ENCODE measurements at regions of chr3 and their contacts with region 1.

Region 1: DNA sequence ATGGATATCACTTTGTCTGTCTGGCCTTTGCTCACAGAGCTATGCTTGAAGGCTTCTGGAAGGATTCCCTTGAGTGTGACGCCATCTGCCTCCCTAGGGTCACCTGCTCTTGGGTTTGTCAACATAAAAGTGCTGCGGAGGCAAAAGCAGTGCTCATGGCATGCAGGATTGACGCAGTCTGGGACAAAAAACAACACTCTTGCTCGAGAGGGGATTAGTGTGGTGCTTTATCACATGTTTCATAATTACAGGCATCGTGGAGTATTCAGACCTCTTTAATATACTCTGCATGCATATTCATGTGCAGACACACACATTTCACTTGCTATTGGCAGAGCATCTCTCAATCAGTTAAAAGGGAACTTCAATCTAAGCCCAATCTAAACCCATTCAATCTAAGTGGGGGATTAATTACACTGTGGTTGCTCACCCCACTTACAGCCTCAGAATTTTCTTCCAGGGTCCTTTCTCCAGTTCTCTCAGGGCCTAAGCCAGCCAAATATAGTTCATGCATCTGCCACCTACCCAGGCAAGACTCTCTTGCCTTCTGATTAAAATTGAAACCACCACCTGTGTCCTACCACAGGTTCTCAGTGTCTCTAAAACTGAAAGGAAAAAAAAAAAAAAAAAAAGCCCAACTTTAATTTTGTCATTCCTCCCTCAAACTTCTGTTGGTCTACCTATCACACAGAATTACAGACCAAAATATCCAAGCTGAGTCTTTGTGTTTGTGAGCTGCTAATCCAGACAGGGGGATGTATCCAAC is 75.6 kb downstream of the BFSP2 start:
- DNase-seq: peak; percentile 80
- H3K4me3 Mint-ChIP-seq: peak overlapping the region; percentile 6
- H3K27ac Mint-ChIP-seq: peak overlapping the region; percentile 70
- H3K4me1 Mint-ChIP-seq: peaks cover 46% of the 10 kb centered on the region
- H3K27me3 Mint-ChIP-seq: no peaks in the 10 kb centered on the region

Region 2: GRCh38 chr3:133464573-133464972 is 10.9 kb before region 1 on chr3:
- intact Hi-C with region 1: loop called (anchors 1 kb)
- DNase-seq: no peak
- H3K4me3 Mint-ChIP-seq: no peak overlapping the region
- H3K27ac Mint-ChIP-seq: no peak overlapping the region
- H3K4me1 Mint-ChIP-seq: peaks cover 40% of the 10 kb centered on the region
- H3K27me3 Mint-ChIP-seq: no peaks in the 10 kb centered on the region

Region 3: DNA sequence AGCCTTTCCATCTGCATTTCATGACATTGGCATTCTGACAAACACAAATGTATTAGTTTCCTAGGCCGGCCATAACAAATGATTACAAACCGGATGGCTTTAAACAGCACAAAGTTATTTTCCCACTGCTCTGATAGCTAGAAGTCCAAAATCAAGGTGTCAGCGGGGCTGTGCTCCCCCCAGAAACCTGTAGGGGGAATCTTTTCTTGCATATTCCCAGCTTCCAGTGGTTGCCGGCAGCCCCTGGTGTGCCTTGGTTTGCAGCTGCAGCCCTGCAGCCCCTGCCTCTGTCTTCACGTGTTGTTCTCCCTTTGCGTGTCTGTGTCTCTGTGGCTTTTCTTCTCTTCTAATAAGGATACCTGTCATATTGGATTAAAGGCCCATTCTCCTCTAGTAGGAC is 19.0 kb after region 1 on chr3:
- intact Hi-C with region 1: loop called (anchors 1 kb)
- DNase-seq: no peak
- H3K4me3 Mint-ChIP-seq: no peak overlapping the region
- H3K27ac Mint-ChIP-seq: no peak overlapping the region
- H3K4me1 Mint-ChIP-seq: peaks cover 33% of the 10 kb centered on the region
- H3K27me3 Mint-ChIP-seq: no peaks in the 10 kb centered on the region

Region 4: GRCh38 chr3:133506215-133506901 is 30.9 kb after region 1 on chr3:
- intact Hi-C with region 1: loop called (anchors 1 kb)
- DNase-seq: peak; percentile 83
- H3K4me3 Mint-ChIP-seq: peak overlapping the region; percentile 73
- H3K27ac Mint-ChIP-seq: peak overlapping the region; percentile 83
- H3K4me1 Mint-ChIP-seq: peaks cover 13% of the 10 kb centered on the region
- H3K27me3 Mint-ChIP-seq: no peaks in the 10 kb centered on the region